ENCODE measurements at regions of chr20 and their contacts with region 1.

Region 1: GRCh38 chr20:35541783-35542588 is at the start of gene ERGIC3:
- DNase-seq: peak; percentile 99
- ATAC-seq: peak; percentile 99
- H3K4me3 Mint-ChIP-seq: peak within 1 kb of the TSS; percentile 83
- H3K27ac Mint-ChIP-seq: peak within 1 kb of the TSS; percentile 83
- H3K4me1 Mint-ChIP-seq: peaks cover 15% of the 10 kb centered on the region
- H3K27me3 Mint-ChIP-seq: no peaks in the 10 kb centered on the region
- total RNA-seq, gene ERGIC3: 109 to 127 TPM

Region 2: GRCh38 chr20:35664544-35665221 is 122.7 kb after region 1 on chr20 and contains the starts of genes CPNE1 and RBM12:
- CTCF ChIA-PET with region 1: no interaction called
- POLR2A ChIA-PET with region 1: interaction called, 9 read pairs
- intact Hi-C with region 1: loop called (anchors 1 to 5 kb)
- DNase-seq: peak; percentile 96
- ATAC-seq: peak; percentile 68
- H3K4me3 Mint-ChIP-seq: peak within 1 kb of the TSS; percentile 80
- H3K27ac Mint-ChIP-seq: peak within 1 kb of the TSS; percentile 100
- H3K4me1 Mint-ChIP-seq: peaks cover 36% of the 10 kb centered on the region
- H3K27me3 Mint-ChIP-seq: no peaks in the 10 kb centered on the region
- total RNA-seq, gene CPNE1: 249 to 258 TPM
- total RNA-seq, gene RBM12: 122 to 148 TPM

Region 3: GRCh38 chr20:35771689-35772562 is 229.9 kb after region 1 on chr20 and contains the start of gene PHF20:
- CTCF ChIA-PET with region 1: no interaction called
- POLR2A ChIA-PET with region 1: no interaction called
- intact Hi-C with region 1: loop called in 1 of 2 experiments (anchors 1 kb)
- DNase-seq: peak; percentile 100
- ATAC-seq: peak; percentile 91
- H3K4me3 Mint-ChIP-seq: peak within 1 kb of the TSS; percentile 81
- H3K27ac Mint-ChIP-seq: peak within 1 kb of the TSS; percentile 94
- H3K4me1 Mint-ChIP-seq: peaks cover 76% of the 10 kb centered on the region
- H3K27me3 Mint-ChIP-seq: no peaks in the 10 kb centered on the region
- total RNA-seq, gene PHF20: 54.3 to 61.6 TPM

Region 4: DNA sequence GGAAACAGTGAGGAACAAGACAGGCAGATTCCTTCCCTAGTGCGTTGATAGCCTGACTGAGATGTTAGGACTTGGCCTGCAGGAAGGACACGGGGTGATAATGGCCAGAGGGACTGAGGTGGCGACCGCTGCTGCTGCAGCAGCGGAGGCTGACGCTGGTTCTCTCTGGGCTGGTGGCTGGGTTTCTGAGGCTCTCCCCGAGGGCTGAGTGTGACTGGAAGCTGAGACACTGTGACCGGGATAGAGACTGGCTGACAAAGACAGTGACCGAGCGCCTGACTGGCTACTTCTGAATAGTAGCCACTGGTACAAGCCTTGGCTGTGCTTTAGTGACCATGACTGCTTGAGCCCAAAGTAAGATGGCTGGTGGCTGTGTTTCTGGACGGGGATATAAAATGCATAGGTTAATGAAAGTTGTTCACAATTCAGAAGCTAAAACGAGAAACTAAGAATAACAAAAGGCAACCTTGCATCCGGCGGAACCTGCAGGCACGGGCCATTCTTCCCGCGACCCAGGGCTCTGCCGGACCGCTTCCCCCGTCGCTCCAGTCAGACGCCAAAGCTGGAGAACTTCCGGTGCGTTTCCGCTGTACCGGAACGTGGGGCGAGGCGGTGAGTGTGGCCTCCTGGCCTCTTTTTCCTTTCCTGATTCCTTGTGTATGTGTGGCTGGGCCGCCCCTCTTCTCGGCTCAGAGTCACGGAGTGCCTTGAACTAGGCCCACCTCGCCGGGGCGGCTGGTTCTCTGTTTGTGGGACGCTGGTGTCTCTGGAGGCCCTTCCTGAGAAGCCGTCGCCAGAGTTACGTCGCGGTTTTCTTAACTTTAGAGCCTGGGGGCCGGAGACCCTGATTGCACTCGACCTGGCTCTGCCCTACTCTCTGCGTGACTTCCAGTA is 694.2 kb after region 1 on chr20 and contains the start of gene AAR2:
- CTCF ChIA-PET with region 1: no interaction called
- POLR2A ChIA-PET with region 1: no interaction called
- intact Hi-C with region 1: loop called in 1 of 2 experiments (anchors 1 kb)
- DNase-seq: peak; percentile 91
- ATAC-seq: peak; percentile 99
- H3K4me3 Mint-ChIP-seq: peak within 1 kb of the TSS; percentile 78
- H3K27ac Mint-ChIP-seq: peak within 1 kb of the TSS; percentile 81
- H3K4me1 Mint-ChIP-seq: peaks cover 32% of the 10 kb centered on the region
- H3K27me3 Mint-ChIP-seq: no peaks in the 10 kb centered on the region
- total RNA-seq, gene AAR2: 18.7 to 20.7 TPM

Measured in activated CD4-positive, alpha-beta T cell treated with anti-CD3 and anti-CD28 coated beads for 36 hours (primary cell).